GM13977 (cell line): ENCODE measurements at regions of chrX and their contacts with region 1.

Region 1: DNA sequence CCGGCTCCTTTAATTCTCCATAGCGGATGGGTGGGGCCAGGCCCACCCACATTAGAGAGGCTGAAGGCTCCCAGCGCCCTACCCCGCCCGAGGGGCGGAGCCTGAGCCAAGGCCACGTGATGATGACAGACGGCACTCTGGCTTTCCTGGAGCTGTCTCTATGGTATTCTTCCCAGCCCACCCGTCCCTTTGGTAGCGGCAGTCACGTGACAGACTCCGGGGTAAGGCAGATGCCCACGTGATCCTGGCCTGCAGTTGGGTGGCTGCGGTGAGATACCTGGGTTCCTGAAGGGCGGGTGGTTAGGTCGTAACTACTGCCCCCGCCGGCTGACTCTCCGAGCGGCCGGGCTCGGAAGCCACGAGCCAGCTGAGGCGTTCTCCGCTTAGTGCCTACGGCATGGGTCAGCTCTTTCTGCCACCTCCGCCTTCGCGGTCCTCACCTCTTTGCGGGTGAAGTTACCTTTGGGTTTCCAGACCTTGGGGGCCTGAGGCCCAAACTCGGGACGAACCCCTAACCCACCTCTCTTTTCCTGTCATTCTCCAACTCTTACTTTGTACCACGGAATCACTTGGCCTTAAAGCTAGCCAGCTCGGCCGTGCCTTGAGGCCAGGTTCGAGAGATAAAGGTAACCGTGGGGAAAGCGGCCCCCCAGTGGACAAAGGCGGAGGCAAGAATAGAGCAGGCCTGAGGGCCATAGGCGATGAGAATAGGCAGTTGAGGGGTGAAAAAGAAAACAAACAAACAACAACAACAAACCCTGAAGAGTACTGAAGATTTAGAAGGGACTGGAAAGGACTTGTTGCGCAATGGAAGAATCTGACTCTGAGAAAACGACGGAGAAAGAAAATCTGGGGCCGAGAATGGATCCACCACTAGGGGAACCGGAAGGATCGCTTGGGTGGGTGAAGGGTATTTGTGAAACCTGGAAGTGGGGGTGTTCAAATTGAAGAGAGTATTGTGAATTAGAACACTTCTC is at the start of gene RRAGB:
- DNase-seq: peak; percentile 83
- CTCF ChIP-seq: peak; percentile 63

Region 2: GRCh38 chrX:54482839-54483593 is 1234.8 kb before region 1 on chrX:
- in situ Hi-C with region 1: no loop called
- DNase-seq: no peak
- CTCF ChIP-seq: no peak

Region 3: GRCh38 chrX:55801805-55802204 is 84.0 kb after region 1 on chrX:
- in situ Hi-C with region 1: loop called (anchors 25 kb)
- DNase-seq: no peak
- CTCF ChIP-seq: no peak